Posterior cingulate gyrus (tissue), 11 donors: ENCODE measurements at regions of chr1 and their contacts with region 1.

Region 1: DNA sequence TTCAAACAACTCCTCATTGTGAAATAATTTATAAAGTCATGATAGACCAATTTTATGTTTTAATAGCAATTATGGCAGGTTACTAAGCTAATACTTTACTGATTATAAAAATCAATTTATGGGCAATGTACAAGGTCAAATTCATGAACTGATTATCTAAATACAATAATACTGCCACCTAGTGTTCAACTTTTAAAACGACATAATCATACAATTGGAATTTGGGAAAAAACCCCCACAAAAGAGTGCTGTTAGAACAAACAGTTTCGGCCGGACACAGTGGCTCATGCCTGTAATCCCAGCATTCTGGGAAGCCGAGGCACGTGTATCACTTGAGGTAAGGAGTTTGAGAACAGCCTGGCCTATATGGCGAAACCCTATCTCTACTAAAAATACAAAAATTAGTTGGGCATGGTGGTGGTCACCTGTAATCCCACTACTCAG is 14.0 kb downstream of the GTF2B start:
- DNase-seq: peak in 1 of 10 donors; percentile 75

Region 2: DNA sequence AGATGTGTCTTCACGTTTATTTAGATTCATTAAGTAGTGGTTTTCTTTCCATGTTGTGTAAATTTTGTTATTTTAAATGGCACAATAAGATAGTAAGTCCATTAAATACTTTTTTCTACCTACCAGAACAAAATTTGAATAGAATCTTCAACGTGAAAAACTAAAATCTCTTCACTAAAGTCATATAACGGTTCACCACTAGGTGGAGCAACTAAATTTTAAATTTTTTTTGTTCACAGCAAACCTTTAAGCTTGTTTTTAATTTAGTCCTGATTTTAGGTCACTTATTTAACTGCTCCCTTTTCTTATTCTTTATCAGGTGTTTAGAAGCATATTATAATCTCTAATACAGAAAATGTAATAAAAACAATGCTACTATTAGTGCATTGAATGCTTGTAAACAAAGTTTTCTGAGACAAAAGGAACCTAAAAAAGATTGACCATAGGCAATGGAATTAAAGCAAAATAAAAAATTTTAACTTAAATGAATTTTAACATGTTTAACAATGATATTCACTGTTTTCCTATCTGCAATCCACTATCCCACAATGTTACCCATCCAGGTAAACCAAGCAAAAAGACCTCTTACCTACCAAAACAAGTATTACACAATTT is 221.6 kb before region 1 on chr1:
- intact Hi-C with region 1: loop called (anchors 1 kb)
- DNase-seq: no peak

Region 3: DNA sequence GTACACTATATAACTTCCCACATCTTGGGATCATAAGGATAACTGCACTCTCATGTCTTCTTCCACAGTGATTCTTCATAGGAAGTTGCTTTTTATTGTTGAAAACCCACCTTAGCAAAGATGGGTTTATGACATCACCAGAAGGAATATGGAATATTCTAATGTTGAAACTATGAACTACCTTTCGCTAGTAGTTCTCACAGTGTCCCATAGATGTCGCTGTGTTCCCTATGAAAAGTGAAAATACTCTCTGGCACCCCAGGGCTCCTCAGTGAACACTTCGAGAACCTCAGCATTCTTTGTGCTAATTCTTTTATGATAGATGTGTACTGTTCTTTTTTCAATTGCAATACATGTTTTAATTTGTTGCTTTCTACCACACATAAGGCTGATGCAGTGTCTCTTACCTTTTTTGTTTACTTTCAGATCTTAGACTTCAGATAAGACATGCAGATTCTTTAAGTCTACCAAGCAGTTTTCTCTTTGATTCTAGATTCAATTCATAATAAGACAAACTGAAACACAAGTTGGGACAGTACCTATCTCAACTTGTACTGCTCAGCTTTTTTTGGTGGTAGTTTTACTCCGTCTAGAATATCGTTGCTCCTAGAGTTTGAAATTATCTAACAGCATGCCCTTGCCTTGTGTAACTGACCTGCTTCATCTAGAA is 76.9 kb before region 1 on chr1:
- intact Hi-C with region 1: loop called (anchors 2 kb)
- DNase-seq: no peak